ENCODE measurements at regions of chr2 and their contacts with region 1.

Region 1: GRCh38 chr2:105576440-105577252 is 168.1 kb upstream of the NCK2 start:
- DNase-seq: peak in 1 of 2 donors; percentile 70
- H3K4me3 ChIP-seq: no peak overlapping the region
- CTCF ChIP-seq: no peak
- POLR2A ChIP-seq: no peak

Region 2: DNA sequence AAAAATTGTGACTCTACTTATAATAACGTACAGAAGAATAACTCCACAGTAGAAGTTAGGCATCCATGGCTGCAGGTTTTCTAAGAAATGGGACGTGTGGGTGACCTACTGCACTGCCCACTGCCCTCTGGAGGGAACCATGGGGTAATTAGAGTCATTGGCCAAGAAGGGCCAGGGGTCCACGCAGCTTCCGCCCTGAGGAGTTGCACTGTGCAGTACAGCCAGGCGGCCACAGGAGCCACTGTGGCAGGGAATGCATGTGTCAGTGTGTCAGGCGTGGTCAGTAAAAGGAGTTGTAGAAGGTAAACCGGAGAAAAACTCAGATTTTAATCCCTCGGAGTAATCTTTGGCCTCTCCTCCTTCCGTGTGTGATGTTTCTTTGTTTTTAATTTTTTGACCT is 192.9 kb after region 1 on chr2:
- intact Hi-C with region 1: no loop called
- DNase-seq: peak in 1 of 2 donors; percentile 36
- H3K4me3 ChIP-seq: no peak overlapping the region
- CTCF ChIP-seq: no peak
- POLR2A ChIP-seq: no peak

Region 3: GRCh38 chr2:106073678-106074406 is 497.2 kb after region 1 on chr2:
- intact Hi-C with region 1: loop called (anchors 10 kb)
- DNase-seq: no peak
- H3K4me3 ChIP-seq: no peak overlapping the region
- CTCF ChIP-seq: no peak
- POLR2A ChIP-seq: no peak

Region 4: GRCh38 chr2:107091163-107091864 is 1514.7 kb after region 1 on chr2:
- intact Hi-C with region 1: loop called (anchors 5 kb)
- DNase-seq: no peak
- H3K4me3 ChIP-seq: no peak overlapping the region
- CTCF ChIP-seq: no peak
- POLR2A ChIP-seq: no peak

Measured in lower leg skin (tissue), 4 donors.